Activated CD4-positive, alpha-beta T cell treated with anti-CD3 and anti-CD28 coated beads, Interleukin-2, amount 10 ng/mL, durations not matched to agents 7 days and 5 days (primary cell): ENCODE measurements at regions of chr20 and their contacts with region 1.

Region 1: DNA sequence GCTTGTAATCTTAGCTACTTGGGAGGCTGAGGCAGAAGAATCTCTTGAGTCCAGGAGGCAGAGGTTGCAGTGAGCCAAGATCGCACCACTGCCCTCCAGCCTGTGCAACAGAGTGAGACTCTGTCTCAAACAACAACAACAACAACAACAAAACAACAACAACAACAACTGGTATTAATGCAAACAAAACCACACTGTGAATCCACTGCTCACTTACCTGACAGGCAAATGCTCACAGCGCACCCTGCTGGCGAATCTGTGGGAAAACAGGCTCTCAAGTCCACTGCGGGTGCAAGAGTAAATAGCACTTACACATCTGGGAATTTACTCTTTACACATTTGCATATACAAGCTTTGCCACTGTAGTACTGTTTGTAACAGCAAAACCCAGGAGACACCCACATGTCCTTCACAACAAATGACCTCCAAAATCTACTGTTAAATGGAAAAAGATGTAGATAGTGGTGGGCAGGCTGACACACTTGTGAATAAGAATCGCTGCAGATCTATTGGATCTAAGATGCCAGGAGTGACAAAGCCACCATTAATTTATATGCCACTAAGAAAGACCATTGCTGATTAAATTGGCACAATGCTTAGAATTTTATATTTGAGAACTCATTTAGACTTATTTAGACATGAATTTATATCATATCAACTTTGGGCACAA is 29.3 kb downstream of the NSFL1C start:
- DNase-seq: peak; percentile 88
- H3K4me3 Mint-ChIP-seq: no peak overlapping the region
- H3K27ac Mint-ChIP-seq: peak overlapping the region; percentile 43
- H3K4me1 Mint-ChIP-seq: peaks cover 51% of the 10 kb centered on the region
- H3K27me3 Mint-ChIP-seq: peaks cover 14% of the 10 kb centered on the region

Region 2: DNA sequence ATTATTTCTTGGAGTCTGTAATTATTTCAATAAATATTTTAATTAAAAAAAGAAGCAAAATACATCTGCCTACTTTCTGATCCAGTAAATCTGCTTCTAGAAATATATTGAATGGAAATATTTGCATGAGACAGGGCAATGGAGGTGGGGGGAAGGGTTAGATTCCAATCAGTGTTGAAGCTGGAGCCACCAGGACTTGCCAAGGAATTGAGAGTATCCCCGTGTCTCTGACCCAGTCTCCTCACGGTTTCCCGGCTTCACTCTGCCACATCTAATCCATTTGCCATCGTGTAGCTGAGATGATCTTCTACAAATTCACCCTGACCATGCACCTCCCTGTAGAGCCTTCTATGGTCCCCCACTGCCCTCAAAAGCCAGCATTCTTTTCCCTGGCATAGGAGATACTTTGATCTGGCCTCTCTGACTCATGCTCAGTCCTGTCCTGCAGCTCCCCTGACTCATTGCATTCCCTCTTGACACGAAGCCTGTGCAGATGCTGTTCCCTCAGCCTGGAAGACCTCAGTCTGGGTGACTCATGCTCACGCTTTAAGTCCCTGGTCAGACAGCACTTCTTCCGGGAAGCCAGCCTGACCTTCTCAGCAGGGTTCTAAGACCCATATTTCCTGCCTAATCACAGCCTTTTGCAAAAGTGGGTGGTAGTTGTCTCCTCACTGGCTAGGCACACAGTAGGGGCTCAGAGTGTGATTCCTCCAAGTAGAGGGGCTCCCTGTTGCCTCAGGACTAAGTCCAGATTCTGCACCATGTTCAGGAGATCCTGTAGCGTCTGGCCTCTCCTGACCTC is 21.5 kb before region 1 on chr20:
- CTCF ChIA-PET with region 1: no interaction called
- POLR2A ChIA-PET with region 1: no interaction called
- DNase-seq: no peak
- H3K4me3 Mint-ChIP-seq: no peak overlapping the region
- H3K27ac Mint-ChIP-seq: no peak overlapping the region
- H3K4me1 Mint-ChIP-seq: peaks cover 5% of the 10 kb centered on the region
- H3K27me3 Mint-ChIP-seq: peaks cover 42% of the 10 kb centered on the region

Region 3: DNA sequence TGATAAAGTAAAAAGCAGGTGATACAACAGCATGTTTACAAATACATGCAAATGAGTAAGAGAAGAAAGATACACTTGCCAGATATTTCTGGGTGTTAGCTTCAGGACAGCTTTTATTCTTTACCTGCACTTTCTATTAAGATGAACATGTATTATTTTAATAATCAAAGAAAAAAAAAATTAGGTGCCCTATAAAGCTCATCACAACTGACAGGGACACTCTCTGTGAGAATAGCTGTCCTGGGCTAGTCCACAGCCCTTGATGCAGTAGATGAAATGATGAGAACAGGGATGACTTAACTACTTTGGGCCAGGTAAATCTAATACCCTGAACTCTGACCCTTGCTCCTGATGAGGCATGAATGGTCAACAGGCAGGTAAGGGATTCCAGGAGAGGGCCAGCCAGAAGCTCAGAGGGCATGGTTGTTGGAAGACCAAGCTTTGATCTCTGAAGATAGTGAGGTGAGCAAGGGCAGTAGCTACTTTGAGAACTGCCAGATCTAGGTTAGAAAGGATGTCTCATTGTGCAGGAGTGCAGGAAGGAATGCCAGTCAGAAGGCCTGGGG is 13.6 kb after region 1 on chr20:
- CTCF ChIA-PET with region 1: interaction called, 10 read pairs
- POLR2A ChIA-PET with region 1: no interaction called
- DNase-seq: no peak
- H3K4me3 Mint-ChIP-seq: no peak overlapping the region
- H3K27ac Mint-ChIP-seq: no peak overlapping the region
- H3K4me1 Mint-ChIP-seq: no peaks in the 10 kb centered on the region
- H3K27me3 Mint-ChIP-seq: no peaks in the 10 kb centered on the region

Region 4: DNA sequence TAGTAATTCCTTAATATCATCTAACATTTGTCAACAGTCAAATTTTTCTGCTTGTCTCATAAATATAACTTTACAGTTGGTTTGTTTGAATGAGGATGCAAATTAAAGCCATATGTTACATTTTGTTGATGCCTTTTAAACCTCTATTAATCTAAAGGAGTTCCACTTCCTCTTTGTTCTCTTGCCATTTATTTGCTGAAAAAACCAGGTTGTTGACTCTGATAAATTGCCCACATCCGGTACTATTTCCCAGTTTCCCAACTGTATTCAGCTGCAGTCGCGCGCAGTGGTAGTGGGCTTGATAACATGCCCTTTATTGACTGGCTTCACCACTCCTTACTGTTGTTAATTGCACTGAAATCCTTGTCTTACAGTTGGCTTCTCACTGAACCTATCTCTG is 86.6 kb after region 1 on chr20:
- CTCF ChIA-PET with region 1: no interaction called
- POLR2A ChIA-PET with region 1: no interaction called
- DNase-seq: no peak
- H3K4me3 Mint-ChIP-seq: no peak overlapping the region
- H3K27ac Mint-ChIP-seq: no peak overlapping the region
- H3K4me1 Mint-ChIP-seq: peaks cover 3% of the 10 kb centered on the region
- H3K27me3 Mint-ChIP-seq: peaks cover 21% of the 10 kb centered on the region